ENCODE measurements at regions of chr6 and their contacts with region 1.

Region 1: DNA sequence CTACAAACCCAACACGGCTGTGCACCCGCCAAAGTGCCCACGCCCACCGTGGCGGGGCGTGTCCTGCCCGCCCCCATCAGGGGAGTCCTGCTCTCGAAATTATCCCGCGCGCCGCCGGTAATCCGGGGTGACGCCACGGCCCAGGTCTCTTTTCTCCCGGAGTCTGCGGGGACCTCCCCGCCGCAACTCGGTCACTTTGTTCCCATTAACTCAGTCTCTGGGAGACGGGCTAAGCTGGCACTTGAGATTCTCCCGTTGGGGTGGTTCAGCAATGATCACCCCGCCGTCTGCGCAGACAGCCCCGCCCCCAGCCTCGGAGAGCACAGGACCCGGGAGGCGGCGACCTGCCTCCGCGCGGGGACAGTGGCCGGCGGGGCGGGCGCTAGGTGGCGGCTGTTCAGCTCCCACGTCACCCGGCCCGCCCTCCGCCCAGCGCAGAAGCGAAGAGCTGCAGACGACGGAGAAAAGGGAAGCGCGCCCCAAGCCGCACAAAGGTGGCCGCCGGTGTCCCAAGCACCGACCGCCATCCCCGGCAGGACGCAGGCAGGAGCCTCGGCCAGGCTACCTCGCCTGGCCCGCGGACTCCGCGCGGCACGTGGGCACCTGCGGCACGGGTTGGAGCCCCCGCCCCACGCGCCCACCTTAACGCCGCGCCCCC is 31.5 kb downstream of the SF3B5 start:
- DNase-seq: peak; percentile 90 to 92 (median 91)
- H3K4me3 ChIP-seq: peak overlapping the region; percentile 38 to 91
- H3K4me3 Mint-ChIP-seq: peak overlapping the region; percentile 90 to 95 (median 93)
- H3K27ac ChIP-seq: peak overlapping the region; percentile 88
- H3K27ac Mint-ChIP-seq: peak overlapping the region; percentile 91 to 97 (median 96)
- H3K4me1 ChIP-seq: peaks cover 20% of the 10 kb centered on the region
- H3K4me1 Mint-ChIP-seq: peaks cover 21 to 36% (median 28%) of the 10 kb centered on the region in 4 donors
- H3K27me3 ChIP-seq: no peaks in the 10 kb centered on the region
- H3K27me3 Mint-ChIP-seq: no peaks in the 10 kb centered on the region

Region 2: DNA sequence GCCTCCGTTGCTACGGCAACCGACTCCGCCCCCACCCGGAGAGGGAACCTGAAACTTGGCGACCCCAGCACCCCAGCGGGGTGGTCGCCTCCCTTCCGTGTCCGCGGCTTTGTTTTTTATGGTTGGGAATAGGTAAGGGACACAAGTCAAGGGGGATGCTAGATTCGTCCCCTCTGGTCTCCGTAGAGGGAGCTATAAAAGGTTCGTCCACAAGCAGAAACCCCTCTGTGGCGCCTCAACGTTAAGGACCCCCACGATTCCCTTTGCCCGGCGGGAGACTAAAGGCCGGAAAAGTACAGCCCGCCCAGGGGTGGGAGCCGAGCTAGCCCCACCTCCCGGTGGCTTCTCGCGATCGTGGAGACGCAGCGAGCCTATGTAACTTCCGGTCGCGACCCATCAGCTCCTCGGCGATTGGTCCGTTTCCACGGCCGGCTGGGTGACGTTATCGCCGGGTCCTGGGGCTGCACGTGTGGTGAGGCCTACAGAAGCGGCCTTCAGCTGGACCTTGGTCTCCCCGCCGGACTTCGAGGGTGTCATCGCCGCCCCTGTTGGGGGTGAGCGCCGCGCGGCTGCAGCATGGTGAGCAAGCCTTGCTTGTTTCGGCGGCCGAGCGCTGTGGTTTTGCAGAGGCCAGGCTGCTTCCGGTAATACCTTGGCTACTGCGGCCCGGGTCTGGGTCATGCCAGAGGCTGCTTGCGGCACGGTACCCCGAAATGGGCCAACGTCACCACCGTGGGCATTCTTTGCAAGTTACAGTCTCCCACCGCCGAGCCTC is 220.8 kb before region 1 on chr6 and contains the start of gene LTV1:
- CTCF ChIA-PET with region 1: no interaction called
- POLR2A ChIA-PET with region 1: interaction called, 12 read pairs
- intact Hi-C with region 1: loop called (anchors 2 kb)
- DNase-seq: peak; percentile 89 to 92 (median 90)
- H3K4me3 ChIP-seq: peak within 1 kb of the TSS; percentile 54 to 90
- H3K4me3 Mint-ChIP-seq: peak within 1 kb of the TSS; percentile 93 to 97 (median 95)
- H3K27ac ChIP-seq: peak within 1 kb of the TSS; percentile 92
- H3K27ac Mint-ChIP-seq: peak within 1 kb of the TSS; percentile 96 to 99 (median 98)
- H3K4me1 ChIP-seq: peaks cover 15% of the 10 kb centered on the region
- H3K4me1 Mint-ChIP-seq: peaks cover 19 to 32% (median 25%) of the 10 kb centered on the region in 4 donors
- H3K27me3 ChIP-seq: no peaks in the 10 kb centered on the region
- H3K27me3 Mint-ChIP-seq: no peaks in the 10 kb centered on the region
- total RNA-seq, gene LTV1: 19.9 to 20.8 TPM

Region 3: GRCh38 chr6:143940011-143940597 is 123.8 kb before region 1 on chr6:
- CTCF ChIA-PET with region 1: interaction called, 12 read pairs
- POLR2A ChIA-PET with region 1: interaction called, 5 read pairs
- intact Hi-C with region 1: loop called (anchors 10 kb)
- DNase-seq: peak; percentile 55 to 66 (median 58)
- H3K4me3 ChIP-seq: no peak overlapping the region
- H3K4me3 Mint-ChIP-seq: no peak overlapping the region
- H3K27ac ChIP-seq: no peak overlapping the region
- H3K27ac Mint-ChIP-seq: no peak overlapping the region
- H3K4me1 ChIP-seq: no peaks in the 10 kb centered on the region
- H3K4me1 Mint-ChIP-seq: peaks cover 4 to 7% (median 6%) of the 10 kb centered on the region in 4 donors
- H3K27me3 ChIP-seq: no peaks in the 10 kb centered on the region
- H3K27me3 Mint-ChIP-seq: peaks cover 4 to 5% of the 10 kb centered on the region in 2 donors

Region 4: DNA sequence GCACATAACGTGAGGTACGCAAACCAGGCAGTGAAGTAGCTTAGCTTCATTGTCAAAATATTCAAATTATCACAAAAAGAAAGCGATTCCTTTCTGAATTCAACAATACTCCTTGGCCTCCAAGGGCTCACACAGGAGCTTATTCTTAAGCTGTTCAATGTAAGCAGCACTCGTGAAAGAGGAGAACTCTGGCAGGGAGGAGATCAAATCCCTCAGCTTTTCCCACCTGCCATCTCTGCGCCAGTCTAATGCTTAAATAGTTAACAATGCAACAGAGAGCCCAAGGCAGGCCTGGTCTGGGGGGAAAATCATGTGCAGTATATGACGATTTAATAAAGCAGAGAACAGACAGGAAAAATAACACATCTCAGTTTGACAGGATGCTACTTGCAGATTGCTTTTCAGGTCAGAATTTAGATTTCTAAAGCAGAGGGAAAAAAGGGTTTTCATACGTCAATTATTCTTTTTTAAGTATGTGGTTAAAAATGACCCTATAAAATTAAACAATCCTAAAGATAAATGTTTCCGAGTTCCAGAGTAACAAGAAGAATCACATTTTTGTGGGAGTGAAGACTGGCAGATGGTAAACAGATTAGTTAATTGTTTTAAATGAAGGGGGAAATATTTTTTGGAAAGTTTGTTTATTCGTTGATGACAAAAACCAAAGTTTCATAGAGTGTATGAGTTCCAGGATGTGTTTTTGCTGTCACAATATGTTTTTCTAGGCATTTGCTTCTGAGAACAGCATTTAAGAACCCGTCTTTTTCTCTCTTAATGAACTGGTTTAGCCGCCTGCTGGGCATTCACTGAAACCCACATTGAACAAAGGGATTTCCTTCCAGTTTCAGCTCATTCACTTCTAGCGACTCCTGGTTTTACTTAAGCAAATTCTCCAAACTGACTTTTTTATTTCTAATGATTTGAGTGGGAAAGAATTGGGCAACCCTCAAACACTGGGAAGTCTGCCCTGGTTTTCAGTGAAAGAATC is 101.7 kb before region 1 on chr6:
- CTCF ChIA-PET with region 1: no interaction called
- POLR2A ChIA-PET with region 1: no interaction called
- intact Hi-C with region 1: no loop called
- DNase-seq: no peak
- H3K4me3 ChIP-seq: no peak overlapping the region
- H3K4me3 Mint-ChIP-seq: no peak overlapping the region
- H3K27ac ChIP-seq: no peak overlapping the region
- H3K27ac Mint-ChIP-seq: no peak overlapping the region
- H3K4me1 ChIP-seq: no peaks in the 10 kb centered on the region
- H3K4me1 Mint-ChIP-seq: no peaks in the 10 kb centered on the region
- H3K27me3 ChIP-seq: no peaks in the 10 kb centered on the region
- H3K27me3 Mint-ChIP-seq: no peaks in the 10 kb centered on the region

Region 5: DNA sequence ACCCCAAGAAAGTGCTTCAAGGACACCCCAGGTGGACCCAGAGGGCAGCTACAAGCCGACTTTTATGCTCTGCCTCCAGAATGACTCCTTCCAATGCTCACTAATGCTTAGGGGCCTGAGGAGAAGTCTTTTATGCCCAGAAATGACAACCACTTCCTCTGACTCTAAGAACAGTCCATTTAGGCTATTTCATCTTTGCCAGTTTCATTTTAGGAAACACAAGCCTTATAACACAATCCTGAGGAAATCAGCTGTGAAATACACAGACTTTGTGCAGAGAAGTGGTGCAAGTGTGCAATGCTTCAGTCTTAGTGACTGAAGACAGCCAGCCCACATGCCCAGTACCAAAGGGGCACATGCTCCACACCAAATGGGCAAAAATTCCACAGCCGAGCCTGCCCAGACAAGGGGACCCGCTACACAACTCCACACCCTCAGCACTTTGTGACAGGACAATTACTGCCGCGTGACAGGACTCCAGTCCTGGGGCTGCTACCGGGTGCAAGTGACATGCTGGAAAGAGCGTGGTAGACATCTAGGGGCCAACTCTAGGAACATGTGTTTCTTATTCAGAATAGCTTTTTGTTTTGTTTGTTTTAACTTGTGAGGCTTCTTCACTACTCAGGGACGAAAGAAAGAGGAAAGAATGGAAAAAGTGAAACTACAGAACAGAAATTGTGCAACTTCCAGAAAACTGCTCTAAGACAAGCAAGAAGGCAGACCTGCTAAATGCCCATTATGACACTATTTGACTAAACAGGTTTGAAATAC is 27.6 kb before region 1 on chr6:
- CTCF ChIA-PET with region 1: interaction called, 4 read pairs
- POLR2A ChIA-PET with region 1: interaction called, 3 read pairs
- intact Hi-C with region 1: loop called (anchors 2 kb)
- DNase-seq: no peak
- H3K4me3 ChIP-seq: no peak overlapping the region
- H3K4me3 Mint-ChIP-seq: peak overlapping the region in 7 of 8 donors; percentile 6 to 70 (median 11)
- H3K27ac ChIP-seq: no peak overlapping the region
- H3K27ac Mint-ChIP-seq: peak overlapping the region in 3 of 7 donors; percentile 0 to 11 (median 3)
- H3K4me1 ChIP-seq: peaks cover 11% of the 10 kb centered on the region
- H3K4me1 Mint-ChIP-seq: peaks cover 6 to 16% (median 11%) of the 10 kb centered on the region in 4 donors
- H3K27me3 ChIP-seq: no peaks in the 10 kb centered on the region
- H3K27me3 Mint-ChIP-seq: no peaks in the 10 kb centered on the region

Region 6: DNA sequence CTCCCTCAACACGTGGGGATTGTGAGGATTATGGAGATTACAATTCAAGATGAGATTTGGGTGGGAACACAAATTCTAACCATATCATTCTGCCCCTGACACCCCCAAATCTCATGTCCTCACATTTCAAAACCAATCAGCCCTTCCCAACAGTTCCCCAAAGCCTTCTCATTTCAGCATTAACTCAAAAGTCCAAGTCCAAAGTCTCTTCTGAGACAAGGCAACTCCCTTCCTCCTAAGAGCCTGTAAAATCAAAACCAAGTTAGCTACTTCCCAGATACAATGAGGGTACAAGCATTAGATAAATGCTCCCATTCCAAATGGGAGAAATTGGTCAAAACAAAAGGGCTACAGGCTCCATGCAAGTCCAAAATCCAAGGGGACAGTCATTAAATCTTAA is 16.2 kb before region 1 on chr6:
- CTCF ChIA-PET with region 1: interaction called, 4 read pairs
- POLR2A ChIA-PET with region 1: interaction called, 12 read pairs
- intact Hi-C with region 1: no loop called
- DNase-seq: no peak
- H3K4me3 ChIP-seq: no peak overlapping the region
- H3K4me3 Mint-ChIP-seq: no peak overlapping the region
- H3K27ac ChIP-seq: no peak overlapping the region
- H3K27ac Mint-ChIP-seq: peak overlapping the region in 1 of 7 donors; percentile 80
- H3K4me1 ChIP-seq: no peaks in the 10 kb centered on the region
- H3K4me1 Mint-ChIP-seq: peaks cover 0 to 8% (median 0%) of the 10 kb centered on the region in 4 donors
- H3K27me3 ChIP-seq: no peaks in the 10 kb centered on the region
- H3K27me3 Mint-ChIP-seq: no peaks in the 10 kb centered on the region

Region 7: DNA sequence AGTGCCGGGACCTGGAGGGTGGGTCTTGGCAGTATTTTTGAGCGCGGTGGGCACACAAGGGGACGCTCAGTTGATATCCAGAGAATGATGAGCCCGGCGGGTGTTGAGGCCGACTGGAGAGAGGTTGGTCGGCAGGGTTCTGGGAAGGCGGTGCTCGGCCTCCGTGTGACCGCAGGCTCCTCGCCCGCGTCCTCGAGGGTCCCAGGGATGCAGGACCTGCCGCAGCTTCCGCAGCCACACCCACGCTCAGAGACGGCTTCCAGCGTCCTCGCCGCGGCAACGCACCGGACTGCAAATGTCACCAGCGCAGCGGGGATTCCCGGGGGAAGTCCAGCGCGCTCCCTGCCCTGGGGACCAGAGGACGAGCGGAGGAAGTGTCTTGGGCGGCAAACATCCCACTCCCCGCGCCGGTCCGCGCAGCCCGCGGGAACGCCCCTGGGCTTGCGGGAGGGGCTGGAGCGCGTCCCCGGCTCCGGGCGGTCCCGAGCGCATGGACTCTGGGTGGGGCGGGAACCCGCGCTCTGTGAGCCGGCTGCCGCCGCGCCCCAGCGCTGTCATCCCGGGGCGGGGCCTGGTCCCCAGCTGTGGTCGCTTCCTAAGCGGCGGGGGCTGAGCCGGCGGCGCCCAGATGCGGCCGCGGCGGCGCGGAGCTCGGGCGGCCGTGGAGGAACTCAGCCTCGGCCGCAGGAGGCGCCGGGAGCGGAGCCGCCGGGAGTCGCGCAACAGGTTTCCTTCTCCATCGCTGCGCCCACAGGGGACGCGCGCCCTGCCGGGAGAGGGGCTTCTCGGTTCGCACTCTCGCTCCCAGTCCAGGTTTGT is 86.2 kb after region 1 on chr6 and contains the start of gene STX11:
- CTCF ChIA-PET with region 1: no interaction called
- POLR2A ChIA-PET with region 1: interaction called, 15 read pairs
- intact Hi-C with region 1: no loop called
- DNase-seq: peak; percentile 64 to 78 (median 68)
- H3K4me3 ChIP-seq: peak within 1 kb of the TSS; percentile 63 to 84
- H3K4me3 Mint-ChIP-seq: peak within 1 kb of the TSS; percentile 95 to 97 (median 96)
- H3K27ac ChIP-seq: peak within 1 kb of the TSS; percentile 80
- H3K27ac Mint-ChIP-seq: peak within 1 kb of the TSS; percentile 85 to 98 (median 96)
- H3K4me1 ChIP-seq: peaks cover 29% of the 10 kb centered on the region
- H3K4me1 Mint-ChIP-seq: peaks cover 24 to 29% (median 27%) of the 10 kb centered on the region in 4 donors
- H3K27me3 ChIP-seq: no peaks in the 10 kb centered on the region
- H3K27me3 Mint-ChIP-seq: no peaks in the 10 kb centered on the region
- total RNA-seq, gene STX11: 5.7 to 6.2 TPM